ENCODE measurements at regions of chr3 and their contacts with region 1.

Region 1: GRCh38 chr3:194583604-194584318 is 49.5 kb downstream of the TMEM44 start:
- DNase-seq: peak; percentile 84
- H3K4me3 ChIP-seq: peak overlapping the region; percentile 94
- H3K27ac ChIP-seq: peak overlapping the region; percentile 96
- H3K27me3 ChIP-seq: no peaks in the 10 kb centered on the region
- CTCF ChIP-seq: no peak

Region 2: DNA sequence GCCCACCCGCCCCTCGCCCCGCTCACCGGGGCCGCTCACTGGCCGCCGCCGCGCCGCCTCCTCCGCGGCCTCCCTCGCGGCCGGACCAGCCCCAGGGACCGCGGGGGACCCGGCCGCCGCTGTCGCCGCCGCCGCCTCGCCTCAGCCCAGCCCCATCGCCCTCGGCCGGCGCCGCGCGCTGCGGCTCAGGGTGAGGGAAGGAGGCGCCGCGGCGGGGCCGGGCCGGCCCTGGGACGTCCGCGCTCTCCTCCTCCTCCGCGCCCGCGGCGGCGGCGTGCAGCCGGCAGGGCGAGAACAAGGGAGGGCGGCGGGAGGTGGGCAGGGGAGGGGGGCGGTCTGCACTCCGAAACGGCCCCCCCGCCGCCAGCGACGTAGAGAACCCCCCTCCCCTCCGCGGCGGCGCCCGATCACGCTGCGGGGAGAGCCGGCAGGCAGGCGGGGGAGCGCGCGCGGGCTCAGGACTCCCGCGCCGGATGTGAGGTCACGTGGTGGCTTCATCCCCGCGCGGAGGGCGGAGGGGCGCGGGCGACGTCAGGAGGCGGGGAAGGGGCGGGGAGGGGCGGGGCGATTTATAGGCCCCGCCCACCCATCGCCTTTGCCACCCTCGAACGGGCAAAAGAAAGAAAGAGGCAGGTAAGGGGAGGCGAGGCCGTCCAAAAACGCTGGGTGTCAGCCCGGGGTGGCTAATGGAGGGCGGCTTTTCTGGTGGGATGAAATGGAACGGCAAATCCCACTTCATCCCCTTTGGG is 97.0 kb before region 1 on chr3 and contains the start of gene ATP13A3:
- in situ Hi-C with region 1: loop called (anchors 25 kb)
- DNase-seq: peak; percentile 70
- H3K4me3 ChIP-seq: peak within 1 kb of the TSS; percentile 83
- H3K27ac ChIP-seq: peak within 1 kb of the TSS; percentile 83
- H3K27me3 ChIP-seq: no peaks in the 10 kb centered on the region
- CTCF ChIP-seq: no peak